ENCODE measurements at regions of chr14 and their contacts with region 1.

Region 1: GRCh38 chr14:68795597-68796417 is 2.9 kb upstream of the ZFP36L1 start:
- DNase-seq: peak; percentile 69 to 81
- ATAC-seq: peak; percentile 35 to 42
- H3K4me3 ChIP-seq: peak overlapping the region; percentile 72 to 90 (median 82)
- H3K27ac ChIP-seq: peak overlapping the region; percentile 97 to 100 (median 98)
- H3K4me1 ChIP-seq: peaks cover 0 to 8% of the 10 kb centered on the region in 2 donors
- H3K27me3 ChIP-seq: no peaks in the 10 kb centered on the region
- CTCF ChIP-seq: peak; percentile 92 to 97 (median 96)
- POLR2A ChIP-seq: peak; percentile 79 to 89

Region 2: DNA sequence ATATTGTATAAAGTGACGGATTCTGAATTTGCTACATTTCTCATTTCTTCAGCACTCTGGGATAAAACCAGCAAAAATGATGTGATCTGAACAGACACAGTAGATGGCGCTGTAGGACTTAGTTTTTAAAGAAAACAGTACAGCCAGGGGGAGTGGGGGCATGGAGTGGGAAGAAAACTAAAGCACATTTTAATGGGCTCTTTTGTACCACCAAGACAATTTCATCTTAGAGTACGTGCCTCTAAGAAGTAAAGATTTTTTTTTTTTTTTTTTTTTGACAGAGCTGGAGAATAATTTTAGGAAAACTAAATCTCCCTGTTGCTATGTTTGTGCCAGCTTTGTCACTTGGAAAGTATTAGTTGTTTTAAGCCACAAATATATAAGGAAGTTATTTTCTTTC is 851.9 kb before region 1 on chr14:
- in situ Hi-C with region 1: no loop called
- intact Hi-C with region 1: no loop called
- DNase-seq: peak; percentile 46 to 51
- ATAC-seq: peak; percentile 75 to 81
- H3K4me3 ChIP-seq: no peak overlapping the region
- H3K27ac ChIP-seq: peak overlapping the region in 1 of 4 donors; percentile 20
- H3K4me1 ChIP-seq: peaks cover 20 to 29% of the 10 kb centered on the region in 2 donors
- H3K27me3 ChIP-seq: no peaks in the 10 kb centered on the region
- CTCF ChIP-seq: peak; percentile 64 to 78 (median 75)
- POLR2A ChIP-seq: no peak

Region 3: DNA sequence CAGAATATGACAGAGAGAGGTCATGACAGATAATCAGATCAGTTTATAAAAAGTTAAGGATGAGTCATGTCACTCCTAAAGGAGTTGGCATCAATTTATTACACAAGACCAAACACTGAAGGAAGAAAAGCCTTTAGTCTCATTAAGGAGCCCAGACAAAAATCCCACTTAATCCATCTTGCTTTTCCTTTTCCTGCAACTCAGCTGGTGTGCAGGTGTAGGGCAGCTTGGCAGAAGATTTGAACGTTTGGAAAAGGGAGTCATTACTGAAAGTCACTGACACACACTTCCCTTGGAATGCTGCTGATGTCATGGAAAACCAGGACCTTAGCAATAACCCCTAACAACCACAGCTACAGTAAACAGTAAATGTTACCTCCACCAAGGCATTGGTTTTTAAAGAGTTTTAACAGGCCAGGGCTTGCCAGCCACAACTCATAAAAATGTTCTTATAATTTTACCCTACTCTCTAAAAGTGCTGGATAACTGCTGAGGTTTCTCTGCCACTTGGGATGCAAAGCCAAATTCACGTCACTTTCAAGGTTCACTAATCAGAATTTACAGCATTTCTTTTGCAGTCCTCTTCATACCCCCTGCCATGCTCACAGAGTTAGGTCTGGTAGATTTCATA is 655.6 kb before region 1 on chr14:
- in situ Hi-C with region 1: no loop called
- intact Hi-C with region 1: loop called (anchors 5 kb)
- DNase-seq: peak in 1 of 2 donors; percentile 32
- ATAC-seq: peak; percentile 21 to 35
- H3K4me3 ChIP-seq: no peak overlapping the region
- H3K27ac ChIP-seq: peak overlapping the region; percentile 43 to 70 (median 63)
- H3K4me1 ChIP-seq: peaks cover 48 to 59% of the 10 kb centered on the region in 2 donors
- H3K27me3 ChIP-seq: no peaks in the 10 kb centered on the region
- CTCF ChIP-seq: no peak
- POLR2A ChIP-seq: no peak

Region 4: GRCh38 chr14:68191567-68192321 is 604.1 kb before region 1 on chr14:
- in situ Hi-C with region 1: no loop called
- intact Hi-C with region 1: loop called (anchors 5 kb)
- DNase-seq: peak; percentile 15 to 48
- ATAC-seq: peak; percentile 96 to 98
- H3K4me3 ChIP-seq: no peak overlapping the region
- H3K27ac ChIP-seq: peak overlapping the region; percentile 75 to 83 (median 78)
- H3K4me1 ChIP-seq: peaks cover 30 to 34% of the 10 kb centered on the region in 2 donors
- H3K27me3 ChIP-seq: no peaks in the 10 kb centered on the region
- CTCF ChIP-seq: no peak
- POLR2A ChIP-seq: no peak

Region 5: DNA sequence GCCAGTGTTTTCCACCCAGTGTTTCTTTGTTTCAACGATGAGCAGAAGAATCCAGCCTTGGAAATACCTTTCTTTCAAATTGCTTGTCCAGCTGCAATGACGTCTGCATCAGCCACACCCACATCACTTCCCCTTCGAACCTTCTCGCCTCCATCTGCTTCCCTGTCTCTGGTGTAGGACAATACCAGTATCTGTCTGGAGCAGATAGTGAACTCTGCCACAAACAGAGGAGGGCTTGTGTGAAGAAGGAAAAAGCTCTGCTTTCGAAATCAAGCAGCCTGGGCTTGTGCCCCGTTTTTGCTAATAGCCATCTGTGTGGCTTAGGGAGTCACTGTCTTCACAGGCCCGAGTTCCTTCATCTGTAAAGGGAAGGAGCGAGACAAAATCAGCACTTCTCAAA is 418.3 kb before region 1 on chr14:
- in situ Hi-C with region 1: no loop called
- intact Hi-C with region 1: loop called (anchors 5 kb)
- DNase-seq: peak in 1 of 2 donors; percentile 48
- ATAC-seq: peak; percentile 32 to 42
- H3K4me3 ChIP-seq: no peak overlapping the region
- H3K27ac ChIP-seq: peak overlapping the region; percentile 25 to 61 (median 51)
- H3K4me1 ChIP-seq: peaks cover 20 to 29% of the 10 kb centered on the region in 2 donors
- H3K27me3 ChIP-seq: no peaks in the 10 kb centered on the region
- CTCF ChIP-seq: no peak
- POLR2A ChIP-seq: peak in 1 of 2 donors; percentile 13

Region 6: DNA sequence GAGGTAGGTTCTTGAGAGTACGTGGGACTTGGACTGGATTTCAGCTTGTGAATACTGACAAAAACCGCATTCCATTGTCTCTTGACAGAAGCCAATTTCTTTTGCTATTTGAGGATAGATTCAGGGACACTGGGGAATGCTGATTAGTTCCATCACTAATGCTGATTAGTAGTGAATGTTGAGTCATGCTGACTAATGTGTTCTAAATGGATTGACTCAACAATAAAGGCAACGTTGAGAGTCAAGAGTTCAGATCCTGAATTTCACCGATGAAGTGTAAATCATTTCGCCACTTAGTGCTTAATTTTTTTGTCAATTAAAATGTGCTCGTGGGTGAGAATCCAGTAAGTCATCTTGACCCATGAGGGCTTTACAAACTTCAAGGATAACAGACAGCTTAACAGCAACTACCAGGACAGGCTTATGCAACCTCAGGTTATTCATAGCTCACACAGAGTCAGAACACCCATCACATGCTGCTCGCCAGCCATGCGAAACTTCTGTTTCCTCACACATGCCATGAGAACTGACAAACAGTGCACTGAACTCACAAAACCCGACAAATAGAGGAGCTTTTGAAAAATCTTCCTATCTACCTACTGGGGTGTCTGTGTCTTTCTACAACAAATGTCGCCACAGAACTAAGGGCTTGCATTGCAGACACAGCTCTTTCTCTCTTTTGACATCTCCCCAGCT is 319.4 kb before region 1 on chr14:
- in situ Hi-C with region 1: no loop called
- intact Hi-C with region 1: loop called (anchors 5 kb)
- DNase-seq: peak; percentile 84 to 89
- ATAC-seq: peak; percentile 95 to 98
- H3K4me3 ChIP-seq: no peak overlapping the region
- H3K27ac ChIP-seq: peak overlapping the region; percentile 84 to 95 (median 86)
- H3K4me1 ChIP-seq: peaks cover 30 to 45% of the 10 kb centered on the region in 2 donors
- H3K27me3 ChIP-seq: no peaks in the 10 kb centered on the region
- CTCF ChIP-seq: no peak
- POLR2A ChIP-seq: peak; percentile 29

Region 7: DNA sequence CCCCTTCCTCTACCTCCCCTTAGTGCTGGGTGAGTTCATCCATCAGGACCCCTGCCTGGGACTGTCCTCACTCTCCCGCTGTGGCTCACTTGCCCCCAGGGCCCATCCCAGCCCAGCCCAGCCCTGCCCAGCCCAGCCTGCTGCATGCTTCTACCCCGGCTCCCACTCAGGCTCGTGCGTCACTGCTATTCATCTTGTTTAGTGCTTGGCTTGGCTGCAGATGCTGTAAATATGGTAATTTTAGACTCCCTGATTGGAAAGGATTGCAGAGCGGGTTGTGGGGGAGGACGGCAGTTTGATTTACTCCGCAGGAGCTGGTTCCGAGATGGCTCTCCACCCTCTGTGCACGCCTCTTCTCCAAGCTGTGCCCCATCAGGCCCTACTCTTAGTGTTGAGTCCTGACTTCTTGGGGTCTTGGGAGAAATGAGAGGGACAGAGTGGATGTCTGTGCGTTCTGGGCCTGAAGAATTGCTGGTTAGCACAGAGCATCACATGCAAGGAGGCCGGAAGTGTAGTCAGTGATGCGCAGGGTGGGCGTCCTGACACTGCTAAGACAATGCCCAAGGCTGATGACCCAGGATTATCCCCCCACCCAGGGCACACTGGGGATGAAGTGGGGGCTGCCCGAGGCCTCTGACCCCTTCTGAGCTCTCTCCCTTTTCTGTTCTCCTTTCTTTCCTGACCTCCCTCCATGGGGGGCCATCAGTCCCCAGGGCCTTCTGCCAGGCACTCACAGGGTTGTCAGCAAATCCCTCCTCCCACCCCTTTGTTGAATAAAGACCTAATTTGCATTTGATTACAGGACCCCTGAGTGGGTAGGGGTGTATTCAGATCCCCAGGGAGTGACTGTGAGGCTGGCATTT is 247.4 kb before region 1 on chr14:
- in situ Hi-C with region 1: loop called in 3 of 4 experiments (anchors 5 to 25 kb)
- intact Hi-C with region 1: loop called (anchors 1 kb)
- DNase-seq: peak; percentile 87 to 93
- ATAC-seq: peak; percentile 36 to 52
- H3K4me3 ChIP-seq: peak overlapping the region in 2 of 4 donors; percentile 8 to 18
- H3K27ac ChIP-seq: peak overlapping the region; percentile 93 to 99 (median 97)
- H3K4me1 ChIP-seq: peaks cover 69 to 97% of the 10 kb centered on the region in 2 donors
- H3K27me3 ChIP-seq: no peaks in the 10 kb centered on the region
- CTCF ChIP-seq: no peak
- POLR2A ChIP-seq: peak; percentile 67 to 76

Region 8: GRCh38 chr14:68749487-68750475 is 46.0 kb before region 1 on chr14:
- in situ Hi-C with region 1: no loop called
- intact Hi-C with region 1: no loop called
- DNase-seq: no peak
- ATAC-seq: no peak
- H3K4me3 ChIP-seq: no peak overlapping the region
- H3K27ac ChIP-seq: no peak overlapping the region
- H3K4me1 ChIP-seq: peaks cover 0 to 3% of the 10 kb centered on the region in 2 donors
- H3K27me3 ChIP-seq: no peaks in the 10 kb centered on the region
- CTCF ChIP-seq: no peak
- POLR2A ChIP-seq: no peak

Region 9: DNA sequence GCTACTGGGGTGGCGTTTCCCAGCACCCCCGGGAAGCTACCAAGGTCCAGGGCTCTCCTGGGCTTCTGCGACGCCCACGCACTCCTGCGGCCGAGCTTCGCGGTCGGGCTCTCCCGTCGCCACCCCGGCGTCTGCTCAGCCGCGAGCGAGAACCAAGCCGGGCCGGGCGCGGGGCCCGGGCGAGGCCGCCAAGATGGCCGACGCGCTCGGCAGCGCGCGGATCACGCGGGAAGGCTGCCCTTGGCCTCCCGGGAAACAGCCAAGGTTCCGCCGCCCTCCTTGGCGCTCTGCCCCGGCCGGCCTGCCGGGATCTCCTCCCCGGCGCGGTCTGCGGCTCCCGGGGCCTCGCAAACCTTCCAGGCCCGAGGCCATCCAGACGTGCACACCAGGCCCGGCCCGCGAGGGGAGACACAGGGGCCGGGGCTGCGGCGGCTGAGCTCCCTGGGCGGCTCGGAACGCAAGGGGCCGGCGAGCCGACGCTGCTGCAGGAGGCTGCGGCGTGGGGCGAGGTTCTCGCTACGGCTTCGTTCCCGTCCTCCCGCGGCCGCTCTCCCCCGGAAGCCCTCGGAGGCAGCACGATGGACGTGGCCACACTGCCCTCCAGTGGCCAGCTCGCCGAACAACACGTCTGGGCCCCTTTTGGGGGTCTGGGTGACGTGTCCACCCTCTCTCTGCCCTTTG is 20.6 kb after region 1 on chr14:
- in situ Hi-C with region 1: no loop called
- intact Hi-C with region 1: loop called (anchors 1 kb)
- DNase-seq: peak; percentile 81 to 85
- ATAC-seq: peak; percentile 86 to 91
- H3K4me3 ChIP-seq: peak overlapping the region; percentile 55 to 84 (median 75)
- H3K27ac ChIP-seq: peak overlapping the region; percentile 94 to 100 (median 96)
- H3K4me1 ChIP-seq: peaks cover 34 to 36% of the 10 kb centered on the region in 2 donors
- H3K27me3 ChIP-seq: no peaks in the 10 kb centered on the region
- CTCF ChIP-seq: peak; percentile 97 to 100 (median 98)
- POLR2A ChIP-seq: peak; percentile 51 to 65

Region 10: DNA sequence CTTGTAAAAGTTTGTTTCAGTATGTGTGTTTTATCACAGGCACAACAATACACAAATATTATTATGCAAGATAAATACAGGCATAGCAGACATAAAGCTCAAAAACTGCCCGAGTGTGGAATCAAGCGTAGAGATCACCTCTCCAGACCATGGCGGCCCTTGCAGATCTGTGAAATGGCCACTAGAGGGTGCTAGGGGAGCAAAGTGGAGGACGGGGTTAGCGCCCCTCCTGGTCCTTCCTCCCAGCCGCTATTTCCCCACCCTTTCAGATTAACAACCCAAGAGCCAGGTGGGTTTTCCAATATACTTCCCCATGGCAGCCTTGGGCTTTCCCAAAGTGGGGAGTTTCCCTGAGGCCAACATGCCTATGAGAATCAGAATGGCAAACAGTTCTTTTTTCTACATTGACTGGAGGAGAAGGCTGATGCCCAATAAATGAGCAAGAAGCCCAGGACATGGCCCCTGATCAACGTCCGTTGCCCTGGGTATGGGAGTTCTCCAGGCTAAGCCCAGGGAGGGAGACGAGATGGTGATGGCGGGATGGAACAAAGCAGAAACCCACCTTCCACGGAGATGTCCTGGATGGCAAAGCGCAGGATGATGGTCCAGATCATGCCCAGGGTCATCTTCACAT is 115.9 kb after region 1 on chr14:
- in situ Hi-C with region 1: no loop called
- intact Hi-C with region 1: no loop called
- DNase-seq: peak; percentile 25 to 54
- ATAC-seq: peak; percentile 91 to 93
- H3K4me3 ChIP-seq: no peak overlapping the region
- H3K27ac ChIP-seq: no peak overlapping the region
- H3K4me1 ChIP-seq: peaks cover 0 to 7% of the 10 kb centered on the region in 2 donors
- H3K27me3 ChIP-seq: no peaks in the 10 kb centered on the region
- CTCF ChIP-seq: peak; percentile 89 to 98 (median 94)
- POLR2A ChIP-seq: no peak